ENCODE measurements at regions of chr15 and their contacts with region 1.

Region 1: DNA sequence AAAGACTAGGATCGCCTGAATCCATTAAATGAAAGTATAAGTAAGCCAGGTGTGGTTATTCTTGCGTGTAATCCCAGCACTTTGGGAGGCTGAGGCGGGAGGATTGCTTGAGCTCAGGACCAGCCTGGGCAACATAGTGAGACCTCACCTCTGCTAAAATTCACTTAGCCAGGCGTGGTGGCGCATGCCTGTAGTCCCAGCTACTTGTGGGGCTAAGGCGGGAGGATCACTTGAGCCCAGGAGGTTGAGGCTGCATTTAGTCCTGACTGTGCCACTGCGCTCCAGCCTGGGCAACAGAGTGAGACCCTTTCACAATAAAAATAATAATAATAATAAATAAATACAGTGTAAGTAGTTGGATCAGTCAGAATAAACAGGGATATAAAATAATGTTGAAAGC is 25.5 kb upstream of the HYKK start:
- DNase-seq: no peak
- H3K4me3 ChIP-seq: no peak overlapping the region
- H3K27ac ChIP-seq: no peak overlapping the region
- H3K4me1 ChIP-seq: no peaks in the 10 kb centered on the region
- H3K27me3 ChIP-seq: no peaks in the 10 kb centered on the region
- CTCF ChIP-seq: no peak
- POLR2A ChIP-seq: no peak

Region 2: DNA sequence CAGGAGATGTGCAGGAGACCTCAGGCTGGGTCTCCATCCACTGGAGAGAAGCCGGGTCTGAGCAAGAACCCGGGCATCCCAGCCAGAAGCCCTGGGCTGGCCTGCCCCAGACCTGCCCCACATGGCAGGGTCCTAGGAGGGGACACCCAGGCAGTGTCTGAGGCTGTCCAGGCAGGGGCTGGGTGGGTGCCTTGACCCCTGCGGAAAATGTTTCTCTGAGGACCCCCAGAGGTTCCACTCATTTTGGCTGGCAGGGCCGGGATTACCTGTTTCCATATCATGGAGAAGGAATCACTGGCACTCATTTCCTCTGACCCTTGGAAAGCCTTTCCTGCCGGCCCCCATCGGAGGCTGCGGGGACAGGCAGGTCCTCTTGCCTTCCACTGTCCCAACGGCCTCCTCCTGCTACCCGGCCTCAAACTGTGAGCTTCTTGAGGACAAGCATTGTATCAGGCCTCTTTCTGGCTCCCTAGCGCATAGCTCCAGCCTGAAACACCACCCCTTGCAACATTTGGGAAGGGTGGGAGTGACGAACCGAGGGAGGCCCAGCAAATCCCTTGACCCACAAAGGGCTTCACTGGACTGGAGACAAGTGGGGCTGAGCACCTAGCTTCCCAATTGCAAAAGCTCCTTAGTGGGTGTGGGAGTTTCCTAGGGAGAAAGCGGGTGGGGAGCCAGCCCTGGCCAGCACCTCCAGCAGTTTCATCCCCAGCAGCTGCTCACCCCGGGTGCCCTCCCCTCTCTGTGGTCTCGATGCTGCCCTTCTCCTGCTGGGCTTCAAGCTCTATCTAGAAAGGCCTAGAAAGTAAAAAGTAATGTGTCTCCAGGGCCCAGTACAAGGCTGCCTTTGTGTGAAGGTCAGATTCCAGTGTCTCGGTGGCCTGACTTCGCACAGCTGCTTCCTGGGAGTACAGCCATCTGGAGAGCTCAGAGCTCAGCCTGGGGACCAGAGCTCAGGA is 277.3 kb before region 1 on chr15:
- intact Hi-C with region 1: no loop called
- DNase-seq: peak; percentile 15 to 33
- H3K4me3 ChIP-seq: no peak overlapping the region
- H3K27ac ChIP-seq: no peak overlapping the region
- H3K4me1 ChIP-seq: peaks cover under 1 to 10% of the 10 kb centered on the region in 2 donors
- H3K27me3 ChIP-seq: no peaks in the 10 kb centered on the region
- CTCF ChIP-seq: no peak
- POLR2A ChIP-seq: no peak

Region 3: DNA sequence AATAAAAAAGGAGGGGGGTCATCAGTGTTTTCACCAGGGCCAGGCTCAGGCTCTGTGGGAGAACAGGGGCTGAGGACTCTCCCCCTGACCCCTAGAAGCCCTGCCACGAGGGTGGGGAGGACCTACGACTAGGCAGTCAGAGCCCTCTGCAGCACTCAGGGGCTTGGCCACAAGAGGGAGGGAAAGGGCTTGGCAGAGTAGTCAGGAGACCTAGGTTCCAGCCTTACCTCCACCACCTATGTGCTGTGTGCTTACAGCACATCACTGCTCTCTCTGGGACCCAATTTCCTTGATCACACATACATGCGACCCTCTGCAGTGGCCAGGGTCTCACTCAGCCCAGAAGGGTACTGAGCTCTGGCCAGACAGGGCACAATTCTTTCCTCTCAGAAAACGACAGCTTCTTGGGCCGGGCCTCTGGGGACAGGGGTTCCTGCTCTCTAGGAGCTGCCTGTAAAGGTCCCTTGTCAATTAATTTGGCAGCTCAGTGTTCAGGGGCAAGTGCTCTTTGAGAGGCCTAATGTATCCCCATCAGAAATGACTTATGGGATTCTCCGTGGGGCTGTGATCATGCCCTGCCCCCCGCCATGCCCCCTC is 166.1 kb before region 1 on chr15:
- intact Hi-C with region 1: loop called (anchors 10 kb)
- DNase-seq: no peak
- H3K4me3 ChIP-seq: no peak overlapping the region
- H3K27ac ChIP-seq: no peak overlapping the region
- H3K4me1 ChIP-seq: no peaks in the 10 kb centered on the region
- H3K27me3 ChIP-seq: no peaks in the 10 kb centered on the region
- CTCF ChIP-seq: no peak
- POLR2A ChIP-seq: no peak

Region 4: DNA sequence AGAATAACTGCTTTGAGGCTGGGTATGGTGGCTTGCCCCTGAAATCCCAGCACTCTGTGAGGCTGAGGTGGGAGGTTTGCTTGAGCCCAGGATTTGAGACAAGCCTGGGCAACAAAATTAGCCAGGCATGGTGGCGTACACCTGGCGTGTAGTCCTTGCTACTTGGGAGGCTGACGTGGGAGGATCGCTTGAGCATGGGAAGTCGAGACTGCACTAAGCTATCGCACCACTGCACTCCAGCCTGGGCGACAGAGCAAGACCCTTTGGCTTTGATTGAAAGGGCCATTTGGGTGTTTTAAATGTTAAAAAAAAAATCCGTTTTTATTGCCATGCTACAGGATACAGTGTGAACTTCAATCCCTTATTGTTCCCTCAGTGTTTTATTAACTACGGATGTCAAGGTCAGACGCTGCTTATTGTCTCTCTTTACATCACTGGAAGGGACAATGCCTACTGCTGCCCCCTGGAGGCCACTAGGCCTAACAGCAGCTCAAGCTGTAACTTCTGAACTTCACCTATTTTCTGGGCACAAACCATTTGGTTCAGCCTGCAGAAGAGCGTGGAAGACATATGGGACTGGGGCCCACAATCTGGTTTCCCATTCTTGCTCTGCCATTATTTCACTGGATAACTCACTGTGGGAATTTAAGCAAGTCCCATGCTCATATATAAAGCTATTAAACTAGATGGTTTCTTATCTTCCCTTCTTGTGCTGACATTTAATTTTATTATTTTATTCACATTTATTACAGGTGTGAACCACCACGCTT is 59.2 kb before region 1 on chr15:
- intact Hi-C with region 1: loop called (anchors 10 kb)
- DNase-seq: peak; percentile 63 to 74
- H3K4me3 ChIP-seq: no peak overlapping the region
- H3K27ac ChIP-seq: no peak overlapping the region
- H3K4me1 ChIP-seq: no peaks in the 10 kb centered on the region
- H3K27me3 ChIP-seq: no peaks in the 10 kb centered on the region
- CTCF ChIP-seq: peak; percentile 73 to 93 (median 86)
- POLR2A ChIP-seq: no peak